Lower leg skin (tissue), 4 donors: ENCODE measurements at regions of chrX and their contacts with region 1.

Region 1: DNA sequence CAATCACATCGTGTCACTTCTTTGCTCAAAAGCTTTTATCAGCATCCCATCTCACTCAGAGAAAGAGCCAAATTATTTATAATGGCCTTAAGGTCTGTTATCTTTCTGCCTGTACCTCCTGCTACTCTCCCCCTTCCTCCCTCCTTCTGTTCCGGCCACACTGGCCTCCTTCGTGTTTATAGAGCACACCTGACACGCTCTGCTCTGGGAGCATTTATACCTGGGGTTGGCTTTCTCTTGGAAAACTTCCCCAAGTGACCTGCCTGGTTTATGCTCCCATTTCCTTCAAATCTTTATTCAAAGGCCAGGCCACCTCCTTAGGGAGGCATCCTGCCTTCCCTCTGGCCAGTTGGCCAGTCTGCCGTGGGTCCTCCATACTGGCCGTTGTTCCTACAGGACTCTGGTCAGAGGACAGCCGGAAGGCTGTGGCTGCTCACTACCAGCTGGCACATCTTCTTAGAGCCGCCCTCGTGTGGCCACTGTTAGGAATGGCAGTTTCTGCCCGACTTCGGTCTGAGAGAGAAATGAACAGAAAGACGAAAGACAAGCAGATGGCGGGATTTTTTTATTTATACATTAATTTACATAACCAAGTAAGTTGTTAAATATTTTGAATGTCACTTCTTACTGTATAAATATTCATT is 80.2 kb upstream of the CBLL2 start:
- DNase-seq: peak; percentile 21 to 90
- H3K4me3 ChIP-seq: no peak overlapping the region
- CTCF ChIP-seq: no peak
- POLR2A ChIP-seq: no peak

Region 2: DNA sequence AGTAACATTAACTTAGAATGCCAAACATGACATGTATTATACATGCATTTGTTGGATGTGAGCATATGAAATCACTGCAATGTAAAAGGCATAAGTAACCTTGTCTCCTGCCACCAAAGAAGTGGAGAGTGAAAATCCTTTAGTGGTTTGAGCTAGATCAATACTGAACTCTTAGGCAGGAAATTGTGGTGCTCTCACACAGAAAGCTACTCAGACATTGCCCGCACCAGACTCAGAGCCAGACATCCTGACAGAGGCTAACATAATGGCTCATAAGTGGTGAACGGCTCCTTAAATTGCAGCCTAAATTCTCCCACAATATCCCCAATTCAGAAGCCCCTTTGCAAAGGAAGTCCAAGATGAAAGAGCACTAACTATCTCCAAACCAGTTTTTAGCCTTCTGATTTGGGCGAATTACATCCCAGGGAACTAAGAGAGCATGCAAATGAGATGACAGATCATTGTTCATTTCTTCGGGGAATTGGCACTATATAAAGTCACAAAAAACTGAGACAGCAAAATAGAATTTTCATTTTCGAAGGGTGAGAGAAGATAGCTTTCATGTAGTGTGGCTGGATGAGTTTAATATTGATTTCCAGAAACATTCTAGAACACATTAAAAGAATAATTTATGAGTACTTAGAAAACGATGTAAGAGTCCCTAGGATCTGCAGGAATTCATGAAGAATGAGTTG is 1692.2 kb before region 1 on chrX:
- intact Hi-C with region 1: loop called (anchors 10 kb)
- DNase-seq: no peak
- H3K4me3 ChIP-seq: no peak overlapping the region
- CTCF ChIP-seq: no peak
- POLR2A ChIP-seq: no peak

Region 3: GRCh38 chrX:21926527-21927278 is 265.8 kb before region 1 on chrX:
- intact Hi-C with region 1: loop called (anchors 5 kb)
- DNase-seq: no peak
- H3K4me3 ChIP-seq: no peak overlapping the region
- CTCF ChIP-seq: no peak
- POLR2A ChIP-seq: no peak

Region 4: DNA sequence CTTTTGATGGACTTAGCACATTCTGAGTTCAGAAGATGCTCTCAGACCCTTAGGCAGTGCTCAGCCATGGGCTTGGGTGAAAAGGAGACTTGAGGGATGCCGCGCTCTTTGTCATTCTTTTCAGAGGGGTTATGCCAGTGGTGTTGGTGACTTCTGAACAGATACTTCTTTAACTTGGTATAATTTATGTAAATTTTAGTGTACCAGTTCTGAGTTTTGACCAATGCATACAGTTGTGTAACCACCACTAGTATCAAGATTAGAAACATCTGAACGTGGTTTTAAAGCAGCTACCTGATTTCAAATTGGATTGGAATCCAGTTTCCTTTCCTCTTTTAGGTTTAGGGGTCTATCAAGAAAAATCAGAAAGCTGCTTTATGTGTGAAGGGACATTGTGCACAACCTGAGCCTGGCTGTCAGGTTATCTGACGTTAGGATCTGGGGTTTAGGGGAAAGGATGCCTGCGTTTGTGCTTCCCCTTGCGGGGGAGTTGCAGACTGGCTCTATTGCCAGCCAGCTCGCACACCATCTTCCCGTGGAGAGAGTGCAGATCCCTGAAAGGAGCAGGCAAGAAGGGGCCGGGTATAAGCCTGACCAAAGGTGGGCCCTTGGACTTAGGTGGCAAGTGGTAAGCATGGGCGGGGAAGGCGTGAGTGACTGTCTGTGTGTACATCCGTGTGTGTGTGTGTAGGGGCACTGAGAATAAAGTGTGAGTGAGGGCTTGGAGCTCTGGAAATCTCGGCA is 233.0 kb before region 1 on chrX:
- intact Hi-C with region 1: no loop called
- DNase-seq: no peak
- H3K4me3 ChIP-seq: no peak overlapping the region
- CTCF ChIP-seq: no peak
- POLR2A ChIP-seq: no peak

Region 5: GRCh38 chrX:21985332-21985777 is 207.2 kb before region 1 on chrX:
- intact Hi-C with region 1: loop called (anchors 10 kb)
- DNase-seq: peak; percentile 71 to 89
- H3K4me3 ChIP-seq: no peak overlapping the region
- CTCF ChIP-seq: peak in 1 of 3 donors; percentile 57
- POLR2A ChIP-seq: no peak